ENCODE measurements at regions of chr5 and their contacts with region 1.

Region 1: GRCh38 chr5:140632150-140633020 is 590 bp downstream of the CD14 start:
- H3K4me3 ChIP-seq: no peak overlapping the region
- H3K27ac ChIP-seq: no peak overlapping the region
- H3K4me1 ChIP-seq: no peaks in the 10 kb centered on the region
- CTCF ChIP-seq: no peak

Region 2: DNA sequence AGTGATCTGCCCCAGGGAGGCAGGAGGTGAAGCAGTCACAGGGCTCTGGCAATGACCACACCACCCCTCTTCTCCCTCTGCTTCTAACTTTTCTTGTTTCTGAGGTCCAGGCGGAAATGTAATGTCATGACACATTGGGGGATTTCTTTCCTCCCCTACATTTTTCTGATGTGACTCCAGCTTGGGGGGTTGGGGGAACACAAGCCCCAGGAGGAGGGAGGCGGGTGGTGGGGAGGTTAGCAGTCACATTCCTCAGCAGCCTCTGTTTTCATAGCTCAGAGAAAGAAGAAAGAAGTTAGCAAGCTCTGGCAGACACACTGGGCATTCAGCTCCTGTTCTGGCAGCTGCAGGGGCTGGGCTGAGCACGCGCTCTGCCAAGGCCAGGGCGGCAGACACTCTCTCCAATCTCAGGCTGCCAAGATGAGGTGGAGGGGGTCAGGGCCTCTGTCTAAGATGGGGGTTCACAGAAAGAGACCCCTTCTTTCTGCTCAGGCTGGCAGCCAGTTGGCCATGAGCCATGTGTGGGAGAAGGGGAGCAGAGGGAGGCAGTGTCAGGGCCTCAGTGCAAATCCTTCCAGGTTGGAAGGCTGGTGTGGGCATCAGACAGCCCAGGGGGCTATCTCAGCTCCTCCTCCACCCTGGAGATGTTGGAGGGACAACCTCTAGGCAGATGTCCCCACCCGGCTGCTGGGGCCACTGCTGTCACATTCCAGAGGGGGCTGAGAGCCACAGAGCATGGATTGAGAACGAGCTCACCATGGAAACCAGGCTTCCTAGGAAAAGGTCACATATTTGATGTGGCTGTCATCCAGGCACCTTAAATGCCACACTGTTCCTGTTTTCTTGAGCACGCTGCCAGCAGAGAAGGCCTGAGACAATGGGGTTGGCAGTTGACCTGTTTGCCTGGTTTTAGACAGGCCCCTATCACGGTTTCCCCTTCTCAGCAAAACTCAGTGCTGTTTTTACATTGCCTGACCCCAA is 309.3 kb before region 1 on chr5:
- CTCF ChIA-PET with region 1: no interaction called
- POLR2A ChIA-PET with region 1: no interaction called
- H3K4me3 ChIP-seq: no peak overlapping the region
- H3K27ac ChIP-seq: no peak overlapping the region
- H3K4me1 ChIP-seq: peaks cover 9% of the 10 kb centered on the region
- CTCF ChIP-seq: no peak

Region 3: GRCh38 chr5:140557136-140557805 is 75.1 kb before region 1 on chr5 and contains the start of gene SRA1:
- CTCF ChIA-PET with region 1: interaction called, 11 read pairs
- POLR2A ChIA-PET with region 1: interaction called, 5 read pairs
- H3K4me3 ChIP-seq: peak within 1 kb of the TSS; percentile 90
- H3K27ac ChIP-seq: peak within 1 kb of the TSS; percentile 71
- H3K4me1 ChIP-seq: 0 out of 2 replicates have a peak, but pooled peaks cover 4% of the 10 kb centered on the region
- CTCF ChIP-seq: peak; percentile 45; the same call in 1 of the 2 replicates